ENCODE measurements at regions of chr5 and their contacts with region 1.

Region 1: DNA sequence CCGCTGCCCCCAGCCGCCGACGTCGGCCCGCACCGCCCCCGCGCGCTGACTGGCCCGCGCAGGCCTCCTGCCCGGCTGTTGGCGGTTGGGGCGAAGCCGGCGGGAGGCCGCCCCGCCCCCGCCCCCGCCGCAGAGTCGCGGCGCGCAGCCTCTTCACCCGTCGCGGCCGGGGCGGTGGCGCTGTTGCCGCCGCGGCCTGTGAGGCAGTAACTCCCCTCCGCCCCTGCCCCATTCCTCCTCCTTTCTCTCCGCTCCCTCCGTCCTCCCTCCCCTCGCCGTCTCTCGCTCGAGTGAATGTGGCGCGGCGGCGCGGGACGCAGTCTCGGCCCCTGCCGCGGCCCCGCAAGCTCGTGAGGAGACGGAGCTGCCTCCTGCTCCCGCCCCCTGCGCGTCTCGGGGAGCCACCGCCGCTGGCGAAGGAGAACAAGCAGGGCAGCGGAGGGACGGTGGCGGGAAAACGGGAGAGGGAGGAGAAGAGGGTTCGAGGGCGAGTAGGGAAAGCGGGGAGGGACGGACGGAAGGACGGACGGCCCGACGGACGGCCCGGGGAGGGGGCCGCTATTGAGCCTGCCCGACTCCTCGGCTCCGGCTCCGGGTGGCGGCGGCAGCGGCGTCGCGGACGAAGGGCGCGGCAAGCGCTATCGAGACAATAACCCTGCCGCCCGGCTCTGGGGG is 637 bp upstream of the ERBIN start:
- DNase-seq: peak; percentile 93
- H3K4me3 Mint-ChIP-seq: peak overlapping the region; percentile 93
- H3K27ac Mint-ChIP-seq: peak overlapping the region; percentile 95
- H3K4me1 Mint-ChIP-seq: peaks cover 27% of the 10 kb centered on the region
- H3K27me3 Mint-ChIP-seq: peaks cover 17% of the 10 kb centered on the region

Region 2: DNA sequence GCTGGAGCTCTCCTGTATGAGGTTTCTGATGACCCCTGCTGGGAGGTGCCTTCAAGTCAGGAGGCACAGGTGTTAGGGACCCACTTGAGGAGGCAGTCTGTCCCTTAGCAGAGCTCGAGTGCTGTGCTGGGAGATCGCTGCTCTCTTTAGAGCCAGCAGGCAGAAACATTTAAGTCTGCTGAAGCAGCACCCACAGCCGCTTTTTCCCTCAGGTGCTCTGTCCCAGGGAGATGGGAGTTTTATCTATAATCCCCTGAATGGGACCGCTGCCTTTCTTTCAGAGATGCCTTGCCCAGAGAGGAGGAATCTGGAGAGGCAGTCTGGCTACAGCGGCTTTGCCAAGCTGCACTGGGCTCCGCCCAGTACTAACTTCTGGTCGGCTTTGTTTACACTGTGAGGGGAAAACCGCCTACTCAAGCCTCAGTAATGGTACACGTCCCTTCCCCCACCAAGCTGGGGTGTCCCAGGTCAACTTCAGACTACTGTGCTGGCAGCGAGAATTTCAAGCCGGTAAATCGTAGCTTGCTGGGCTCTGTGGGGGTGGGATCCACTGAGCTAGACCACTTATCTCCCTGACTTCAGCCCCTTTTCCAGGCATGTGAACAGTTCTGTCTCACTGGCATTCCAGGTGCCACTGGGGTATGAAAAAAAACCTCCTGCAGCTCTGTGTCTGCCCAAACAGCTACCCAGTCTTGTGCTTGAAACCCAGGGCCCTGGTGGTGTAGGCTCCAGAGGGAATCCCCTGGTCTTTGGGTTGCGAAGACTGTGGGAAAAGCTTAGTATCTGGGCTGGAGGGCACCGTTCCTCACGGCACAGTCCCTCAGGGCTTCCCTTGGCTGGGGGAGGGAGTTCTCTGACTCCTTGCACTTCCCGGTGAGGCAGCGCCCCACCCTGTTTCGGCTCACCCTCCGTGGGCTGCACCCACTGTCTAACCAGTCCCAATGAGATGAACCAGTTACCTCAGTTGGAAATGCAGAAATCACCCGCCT is 985.9 kb before region 1 on chr5:
- intact Hi-C with region 1: no loop called
- DNase-seq: no peak
- H3K4me3 Mint-ChIP-seq: no peak overlapping the region
- H3K27ac Mint-ChIP-seq: no peak overlapping the region
- H3K4me1 Mint-ChIP-seq: no peaks in the 10 kb centered on the region
- H3K27me3 Mint-ChIP-seq: no peaks in the 10 kb centered on the region

Region 3: GRCh38 chr5:65721720-65722574 is 203.8 kb before region 1 on chr5 and contains the starts of genes NLN and SGTB:
- intact Hi-C with region 1: loop called (anchors 2 kb)
- DNase-seq: peak; percentile 96
- H3K4me3 Mint-ChIP-seq: peak within 1 kb of the TSS; percentile 95
- H3K27ac Mint-ChIP-seq: peak within 1 kb of the TSS; percentile 96
- H3K4me1 Mint-ChIP-seq: peaks cover 31% of the 10 kb centered on the region
- H3K27me3 Mint-ChIP-seq: no peaks in the 10 kb centered on the region
- total RNA-seq, gene NLN: 28.0 and 30.7 TPM in 2 replicates
- total RNA-seq, gene SGTB: 10.0 and 10.3 TPM in 2 replicates

Region 4: GRCh38 chr5:65801352-65801783 is 124.4 kb before region 1 on chr5:
- intact Hi-C with region 1: loop called (anchors 1 kb)
- DNase-seq: no peak
- H3K4me3 Mint-ChIP-seq: no peak overlapping the region
- H3K27ac Mint-ChIP-seq: no peak overlapping the region
- H3K4me1 Mint-ChIP-seq: peaks cover 29% of the 10 kb centered on the region
- H3K27me3 Mint-ChIP-seq: no peaks in the 10 kb centered on the region

Region 5: DNA sequence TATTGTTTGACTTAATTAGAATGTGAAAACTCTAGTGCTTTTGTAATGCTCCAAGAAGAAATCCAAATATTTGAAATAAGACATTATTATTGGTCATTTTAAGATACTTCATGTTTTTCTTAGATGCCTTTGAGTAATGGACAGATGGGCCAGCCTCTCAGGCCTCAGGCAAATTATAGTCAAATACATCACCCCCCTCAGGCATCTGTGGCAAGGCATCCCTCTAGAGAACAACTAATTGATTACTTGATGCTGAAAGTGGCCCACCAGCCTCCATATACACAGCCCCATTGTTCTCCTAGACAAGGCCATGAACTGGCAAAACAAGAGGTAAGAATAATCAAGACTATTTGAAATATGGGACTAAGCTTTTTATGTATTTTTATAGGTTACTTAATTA is 149.2 kb after region 1 on chr5:
- intact Hi-C with region 1: loop called (anchors 5 kb)
- DNase-seq: no peak
- H3K4me3 Mint-ChIP-seq: no peak overlapping the region
- H3K27ac Mint-ChIP-seq: no peak overlapping the region
- H3K4me1 Mint-ChIP-seq: peaks cover 5% of the 10 kb centered on the region
- H3K27me3 Mint-ChIP-seq: no peaks in the 10 kb centered on the region

Region 6: DNA sequence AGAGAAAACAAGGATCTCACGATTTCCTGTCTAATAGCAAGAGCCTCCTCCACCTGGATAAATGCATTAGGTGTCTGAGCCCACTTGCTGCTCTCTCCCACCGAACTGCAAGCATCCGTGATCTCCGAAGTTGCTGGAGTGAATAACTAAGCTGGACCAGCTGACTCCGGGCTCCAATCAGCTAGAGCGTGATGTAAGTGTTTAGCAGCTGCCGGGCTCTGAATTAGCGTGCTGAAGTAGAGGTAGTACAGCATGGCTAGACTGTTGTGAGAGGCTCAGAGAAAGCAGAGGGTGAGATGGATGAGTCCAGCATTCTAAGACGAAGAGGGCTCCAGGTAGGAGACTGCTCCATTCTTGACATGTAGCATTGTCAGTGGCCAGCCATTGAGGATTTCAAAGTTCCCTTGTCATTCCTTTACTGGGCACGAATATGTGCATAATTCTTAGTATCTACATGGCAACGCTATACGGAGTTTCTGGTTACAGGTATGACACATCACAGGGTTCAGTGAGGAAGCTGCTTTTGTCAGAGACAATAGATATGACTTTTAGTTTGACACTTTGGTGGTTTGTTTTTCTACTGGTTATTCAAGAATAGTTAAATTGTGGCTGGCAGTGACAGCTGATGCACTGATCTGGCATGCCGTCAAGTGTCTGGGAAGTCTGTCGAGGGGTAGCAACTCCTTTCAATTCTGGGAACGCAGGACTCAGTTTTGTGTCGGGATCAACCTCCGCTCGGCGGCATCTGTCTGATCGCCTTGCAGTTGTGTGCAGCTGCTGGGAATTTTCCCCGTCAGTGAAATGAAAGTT is 903.0 kb after region 1 on chr5:
- intact Hi-C with region 1: loop called (anchors 10 kb)
- DNase-seq: peak; percentile 92
- H3K4me3 Mint-ChIP-seq: peak overlapping the region; percentile 93
- H3K27ac Mint-ChIP-seq: peak overlapping the region; percentile 93
- H3K4me1 Mint-ChIP-seq: peaks cover 56% of the 10 kb centered on the region
- H3K27me3 Mint-ChIP-seq: no peaks in the 10 kb centered on the region